CD8-positive, alpha-beta T cell (primary cell): ENCODE measurements at regions of chr16 and their contacts with region 1.

Region 1: DNA sequence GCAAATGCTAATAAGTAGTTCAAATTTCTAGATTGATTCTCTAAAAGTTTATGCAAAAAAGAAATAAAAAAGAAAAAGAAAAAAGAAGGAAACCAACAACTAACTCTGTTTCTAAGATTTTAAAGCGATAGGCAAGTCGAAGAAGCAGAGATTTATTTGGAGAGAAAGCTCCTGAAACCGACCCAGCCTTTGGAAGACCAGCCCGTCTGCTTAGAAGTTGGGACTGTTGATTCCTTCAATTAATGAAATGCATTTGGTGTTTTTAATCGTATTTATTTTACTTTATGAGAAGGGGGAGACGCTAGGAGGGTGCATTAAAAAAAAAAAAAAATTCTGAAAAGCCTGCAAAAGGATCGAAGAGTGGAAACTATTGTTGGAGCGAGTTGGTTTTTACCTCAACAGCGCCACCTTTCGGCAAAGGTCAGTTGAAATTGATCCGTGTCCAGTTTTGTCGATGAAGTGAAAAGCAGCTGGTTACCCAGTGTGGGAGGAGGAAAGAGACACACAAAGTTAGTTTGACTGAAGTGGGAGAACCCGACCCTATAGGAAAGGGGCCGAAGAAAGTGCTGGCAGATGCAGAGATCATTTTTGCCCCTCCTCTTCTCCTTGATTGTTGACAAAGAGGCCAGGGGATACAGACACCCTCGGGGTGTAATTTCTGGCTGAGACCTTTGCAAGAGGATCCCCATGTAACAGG is 1.5 kb upstream of the MAF start:
- DNase-seq: peak; percentile 63 to 87 (median 81)
- ATAC-seq: no peak
- H3K4me3 ChIP-seq: peak overlapping the region; percentile 62 to 83
- H3K4me3 Mint-ChIP-seq: peak overlapping the region; percentile 91
- H3K27ac ChIP-seq: peak overlapping the region in 1 of 2 experiments; percentile 17
- H3K27ac Mint-ChIP-seq: peak overlapping the region; percentile 42
- H3K4me1 ChIP-seq: peaks cover 12% of the 10 kb centered on the region
- H3K4me1 Mint-ChIP-seq: peaks cover 26% of the 10 kb centered on the region
- H3K27me3 ChIP-seq: peaks cover 0 to 13% of the 10 kb centered on the region in 2 experiments
- H3K27me3 Mint-ChIP-seq: peaks cover 35% of the 10 kb centered on the region
- CTCF ChIP-seq: peak; percentile 92

Region 2: GRCh38 chr16:78099372-78100161 is 1502.5 kb before region 1 on chr16 and contains the start of gene WWOX:
- CTCF ChIA-PET with region 1: no interaction called
- POLR2A ChIA-PET with region 1: interaction called, 4 read pairs
- intact Hi-C with region 1: loop called in 1 of 2 experiments (anchors 1 kb)
- DNase-seq: peak; percentile 90 to 99 (median 95)
- ATAC-seq: peak; percentile 95
- H3K4me3 ChIP-seq: peak within 1 kb of the TSS; percentile 95
- H3K4me3 Mint-ChIP-seq: peak within 1 kb of the TSS; percentile 92
- H3K27ac ChIP-seq: peak within 1 kb of the TSS; percentile 81 to 94
- H3K27ac Mint-ChIP-seq: peak within 1 kb of the TSS; percentile 92
- H3K4me1 ChIP-seq: peaks cover 17% of the 10 kb centered on the region
- H3K4me1 Mint-ChIP-seq: peaks cover 33% of the 10 kb centered on the region
- H3K27me3 ChIP-seq: no peaks in the 10 kb centered on the region
- H3K27me3 Mint-ChIP-seq: no peaks in the 10 kb centered on the region
- CTCF ChIP-seq: peak; percentile 92
- total RNA-seq, gene WWOX: 19.8 to 24.1 TPM

Region 3: GRCh38 chr16:78705694-78706093 is 896.4 kb before region 1 on chr16:
- CTCF ChIA-PET with region 1: interaction called, 21 read pairs
- POLR2A ChIA-PET with region 1: no interaction called
- intact Hi-C with region 1: loop called in 1 of 2 experiments (anchors 5 kb)
- DNase-seq: peak in 2 of 9 experiments; percentile 53 to 69
- ATAC-seq: peak; percentile 69
- H3K4me3 ChIP-seq: no peak overlapping the region
- H3K4me3 Mint-ChIP-seq: no peak overlapping the region
- H3K27ac ChIP-seq: no peak overlapping the region
- H3K27ac Mint-ChIP-seq: no peak overlapping the region
- H3K4me1 ChIP-seq: no peaks in the 10 kb centered on the region
- H3K4me1 Mint-ChIP-seq: peaks cover 6% of the 10 kb centered on the region
- H3K27me3 ChIP-seq: no peaks in the 10 kb centered on the region
- H3K27me3 Mint-ChIP-seq: no peaks in the 10 kb centered on the region
- CTCF ChIP-seq: peak; percentile 46

Region 4: DNA sequence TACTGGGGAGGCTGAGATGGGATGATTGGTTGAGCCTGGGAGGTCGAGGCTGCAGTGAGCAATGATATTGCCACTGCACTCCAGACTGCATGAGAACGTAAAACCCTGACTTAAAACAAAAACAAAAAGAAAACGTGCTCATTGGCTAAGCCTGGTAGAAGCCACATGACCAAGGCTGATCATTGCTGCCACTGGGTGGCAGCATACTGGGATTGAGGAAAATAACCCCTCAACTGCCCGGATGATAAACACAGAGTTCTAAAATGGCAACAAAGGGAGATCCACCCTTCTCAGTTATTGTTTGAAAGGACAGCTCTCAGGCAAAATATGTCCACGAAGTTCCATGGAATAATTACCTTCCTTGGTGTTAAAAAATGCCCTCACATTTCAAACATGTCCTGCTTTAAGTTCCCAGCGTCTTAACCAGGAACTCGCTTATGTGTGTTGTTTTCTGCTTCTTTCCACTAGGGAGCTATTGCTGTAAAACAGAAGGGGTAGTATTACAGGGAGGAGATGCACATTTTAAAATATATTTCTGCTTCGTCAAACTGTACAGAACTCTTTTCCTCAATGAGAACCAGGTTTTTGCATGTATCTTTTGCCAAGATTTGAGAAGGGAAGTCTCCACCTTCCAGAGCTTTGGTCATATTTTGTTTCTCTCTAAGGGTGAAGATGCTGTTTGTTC is 676.9 kb before region 1 on chr16:
- CTCF ChIA-PET with region 1: interaction called, 5 read pairs
- POLR2A ChIA-PET with region 1: no interaction called
- intact Hi-C with region 1: loop called in 1 of 2 experiments (anchors 2 kb)
- DNase-seq: peak in 3 of 9 experiments; percentile 5 to 49 (median 44)
- ATAC-seq: no peak
- H3K4me3 ChIP-seq: no peak overlapping the region
- H3K4me3 Mint-ChIP-seq: no peak overlapping the region
- H3K27ac ChIP-seq: no peak overlapping the region
- H3K27ac Mint-ChIP-seq: no peak overlapping the region
- H3K4me1 ChIP-seq: no peaks in the 10 kb centered on the region
- H3K4me1 Mint-ChIP-seq: no peaks in the 10 kb centered on the region
- H3K27me3 ChIP-seq: no peaks in the 10 kb centered on the region
- H3K27me3 Mint-ChIP-seq: no peaks in the 10 kb centered on the region
- CTCF ChIP-seq: no peak

Region 5: GRCh38 chr16:79272141-79272577 is 329.9 kb before region 1 on chr16:
- CTCF ChIA-PET with region 1: no interaction called
- POLR2A ChIA-PET with region 1: no interaction called
- intact Hi-C with region 1: loop called (anchors 5 kb)
- DNase-seq: peak; percentile 9 to 86 (median 51)
- ATAC-seq: peak; percentile 76
- H3K4me3 ChIP-seq: peak overlapping the region; percentile 6 to 36
- H3K4me3 Mint-ChIP-seq: peak overlapping the region; percentile 76
- H3K27ac ChIP-seq: peak overlapping the region in 1 of 2 experiments; percentile 62
- H3K27ac Mint-ChIP-seq: peak overlapping the region; percentile 90
- H3K4me1 ChIP-seq: peaks cover 42% of the 10 kb centered on the region
- H3K4me1 Mint-ChIP-seq: peaks cover 61% of the 10 kb centered on the region
- H3K27me3 ChIP-seq: peaks cover 0 to 4% of the 10 kb centered on the region in 2 experiments
- H3K27me3 Mint-ChIP-seq: peaks cover 34% of the 10 kb centered on the region
- CTCF ChIP-seq: no peak

Region 6: DNA sequence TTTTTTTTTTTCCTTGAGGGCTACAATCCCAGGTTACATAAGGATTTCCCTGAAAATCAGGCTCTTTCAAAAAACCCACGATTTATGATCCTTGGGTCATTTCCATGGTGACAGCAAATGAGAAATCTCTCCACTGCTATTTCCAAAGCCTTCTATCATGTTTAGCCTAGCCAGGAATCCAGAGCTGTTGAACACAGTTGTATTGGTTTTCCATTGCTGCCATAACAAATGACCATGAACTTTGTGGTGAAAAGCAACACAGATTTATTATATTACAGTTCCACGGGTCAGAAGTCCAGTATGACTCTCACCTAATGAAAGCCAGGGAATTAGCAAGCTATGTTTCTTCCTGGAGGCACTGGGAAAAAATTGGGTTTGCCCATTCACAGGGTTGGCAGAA is 108.2 kb before region 1 on chr16:
- CTCF ChIA-PET with region 1: no interaction called
- POLR2A ChIA-PET with region 1: no interaction called
- intact Hi-C with region 1: no loop called
- DNase-seq: no peak
- ATAC-seq: no peak
- H3K4me3 ChIP-seq: no peak overlapping the region
- H3K4me3 Mint-ChIP-seq: no peak overlapping the region
- H3K27ac ChIP-seq: no peak overlapping the region
- H3K27ac Mint-ChIP-seq: no peak overlapping the region
- H3K4me1 ChIP-seq: peaks cover 10% of the 10 kb centered on the region
- H3K4me1 Mint-ChIP-seq: peaks cover 14% of the 10 kb centered on the region
- H3K27me3 ChIP-seq: no peaks in the 10 kb centered on the region
- H3K27me3 Mint-ChIP-seq: no peaks in the 10 kb centered on the region
- CTCF ChIP-seq: no peak

Region 7: DNA sequence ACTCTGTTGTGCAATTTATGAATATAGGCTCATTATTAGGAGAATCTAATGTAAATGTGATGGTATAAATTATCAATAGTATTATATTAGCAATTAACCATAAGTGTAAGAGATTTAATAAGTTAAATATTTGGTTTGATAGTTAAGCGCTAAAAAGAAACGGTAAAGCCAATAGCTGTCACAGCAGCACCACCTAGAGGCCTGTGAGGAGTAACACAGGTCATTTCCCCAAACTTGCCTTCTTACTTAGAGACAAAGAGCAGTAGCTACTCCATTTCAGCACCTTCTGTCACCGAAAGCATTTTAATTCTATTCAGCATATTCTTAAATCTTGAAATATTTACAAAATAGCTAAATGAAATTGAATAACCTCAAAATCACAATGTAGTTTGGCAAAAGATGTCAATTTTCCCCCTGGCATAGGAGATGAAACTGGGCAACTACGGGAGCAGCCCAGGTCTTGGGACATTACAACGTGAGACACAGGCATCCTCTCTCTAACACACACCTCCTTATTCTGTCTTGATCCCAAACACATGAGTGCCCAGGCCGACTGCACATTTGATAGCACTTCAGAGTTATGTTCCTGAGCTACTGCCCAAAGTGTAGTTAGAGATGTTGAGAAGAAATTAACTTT is 924.5 kb after region 1 on chr16:
- CTCF ChIA-PET with region 1: interaction called, 10 read pairs
- POLR2A ChIA-PET with region 1: no interaction called
- intact Hi-C with region 1: loop called (anchors 10 kb)
- DNase-seq: peak; percentile 10 to 79 (median 49)
- ATAC-seq: peak; percentile 82
- H3K4me3 ChIP-seq: no peak overlapping the region
- H3K4me3 Mint-ChIP-seq: no peak overlapping the region
- H3K27ac ChIP-seq: no peak overlapping the region
- H3K27ac Mint-ChIP-seq: no peak overlapping the region
- H3K4me1 ChIP-seq: peaks cover 4% of the 10 kb centered on the region
- H3K4me1 Mint-ChIP-seq: no peaks in the 10 kb centered on the region
- H3K27me3 ChIP-seq: no peaks in the 10 kb centered on the region
- H3K27me3 Mint-ChIP-seq: no peaks in the 10 kb centered on the region
- CTCF ChIP-seq: peak; percentile 86